ENCODE measurements at regions of chr3 and their contacts with region 1.

Region 1: GRCh38 chr3:196537319-196537984 is 22.3 kb upstream of the SMCO1 start:
- DNase-seq: no peak
- H3K4me3 ChIP-seq: no peak overlapping the region
- H3K27ac ChIP-seq: no peak overlapping the region
- H3K4me1 ChIP-seq: peaks cover 4% of the 10 kb centered on the region
- H3K27me3 ChIP-seq: no peaks in the 10 kb centered on the region
- CTCF ChIP-seq: peak; percentile 45 to 48
- POLR2A ChIP-seq: no peak

Region 2: GRCh38 chr3:196554205-196554604 is 16.8 kb after region 1 on chr3:
- CTCF ChIA-PET with region 1: interaction called, 16 read pairs
- POLR2A ChIA-PET with region 1: no interaction called
- dilution Hi-C with region 1: no loop called
- intact Hi-C with region 1: no loop called
- DNase-seq: no peak
- H3K4me3 ChIP-seq: no peak overlapping the region
- H3K27ac ChIP-seq: no peak overlapping the region
- H3K4me1 ChIP-seq: peaks cover 14% of the 10 kb centered on the region
- H3K27me3 ChIP-seq: no peaks in the 10 kb centered on the region
- CTCF ChIP-seq: no peak
- POLR2A ChIP-seq: no peak

Region 3: GRCh38 chr3:196684548-196685407 is 147.3 kb after region 1 on chr3:
- CTCF ChIA-PET with region 1: interaction called, 3 read pairs
- POLR2A ChIA-PET with region 1: no interaction called
- dilution Hi-C with region 1: no loop called
- intact Hi-C with region 1: loop called (anchors 1 kb)
- DNase-seq: peak; percentile 61
- H3K4me3 ChIP-seq: no peak overlapping the region
- H3K27ac ChIP-seq: no peak overlapping the region
- H3K4me1 ChIP-seq: peaks cover 7% of the 10 kb centered on the region
- H3K27me3 ChIP-seq: peaks cover 0 to 3% of the 10 kb centered on the region in 2 experiments
- CTCF ChIP-seq: peak; percentile 73
- POLR2A ChIP-seq: no peak

Measured in endothelial cell of umbilical vein (primary cell).